ENCODE measurements at regions of chr18 and their contacts with region 1.

Region 1: GRCh38 chr18:3454365-3455089 is 4.6 kb downstream of the TGIF1 start:
- DNase-seq: peak; percentile 62
- H3K4me3 Mint-ChIP-seq: peak overlapping the region; percentile 95
- H3K27ac Mint-ChIP-seq: peak overlapping the region; percentile 99
- H3K4me1 Mint-ChIP-seq: peaks cover 37% of the 10 kb centered on the region
- H3K27me3 Mint-ChIP-seq: no peaks in the 10 kb centered on the region
- CTCF ChIP-seq: peak; percentile 48

Region 2: GRCh38 chr18:3281456-3282400 is 172.8 kb before region 1 on chr18:
- CTCF ChIA-PET with region 1: interaction called, 57 read pairs
- POLR2A ChIA-PET with region 1: interaction called, 59 read pairs
- intact Hi-C with region 1: loop called (anchors 1 kb)
- DNase-seq: peak; percentile 80
- H3K4me3 Mint-ChIP-seq: no peak overlapping the region
- H3K27ac Mint-ChIP-seq: no peak overlapping the region
- H3K4me1 Mint-ChIP-seq: peaks cover 6% of the 10 kb centered on the region
- H3K27me3 Mint-ChIP-seq: no peaks in the 10 kb centered on the region
- CTCF ChIP-seq: peak; percentile 52

Region 3: GRCh38 chr18:3350566-3351527 is 103.7 kb before region 1 on chr18:
- CTCF ChIA-PET with region 1: interaction called, 14 read pairs
- POLR2A ChIA-PET with region 1: interaction called, 40 read pairs
- intact Hi-C with region 1: no loop called
- DNase-seq: peak; percentile 73
- H3K4me3 Mint-ChIP-seq: no peak overlapping the region
- H3K27ac Mint-ChIP-seq: no peak overlapping the region
- H3K4me1 Mint-ChIP-seq: peaks cover 14% of the 10 kb centered on the region
- H3K27me3 Mint-ChIP-seq: no peaks in the 10 kb centered on the region
- CTCF ChIP-seq: no peak

Region 4: GRCh38 chr18:3441290-3441689 is 13.2 kb before region 1 on chr18:
- CTCF ChIA-PET with region 1: interaction called, 11 read pairs
- POLR2A ChIA-PET with region 1: interaction called, 39 read pairs
- intact Hi-C with region 1: no loop called
- DNase-seq: peak; percentile 47
- H3K4me3 Mint-ChIP-seq: no peak overlapping the region
- H3K27ac Mint-ChIP-seq: no peak overlapping the region
- H3K4me1 Mint-ChIP-seq: peaks cover 5% of the 10 kb centered on the region
- H3K27me3 Mint-ChIP-seq: no peaks in the 10 kb centered on the region
- CTCF ChIP-seq: no peak

Region 5: GRCh38 chr18:3585656-3586509 is 131.4 kb after region 1 on chr18:
- CTCF ChIA-PET with region 1: interaction called, 41 read pairs
- POLR2A ChIA-PET with region 1: interaction called, 71 read pairs
- intact Hi-C with region 1: loop called (anchors 1 kb)
- DNase-seq: peak; percentile 90
- H3K4me3 Mint-ChIP-seq: no peak overlapping the region
- H3K27ac Mint-ChIP-seq: no peak overlapping the region
- H3K4me1 Mint-ChIP-seq: peaks cover 14% of the 10 kb centered on the region
- H3K27me3 Mint-ChIP-seq: no peaks in the 10 kb centered on the region
- CTCF ChIP-seq: peak; percentile 64

Measured in MCF 10A (cell line).